HCT116 (cell line): ENCODE measurements at regions of chr1 and their contacts with region 1.

Region 1: GRCh38 chr1:114716304-114717170 is at the start of gene NRAS:
- DNase-seq: peak; percentile 79
- ATAC-seq: peak; percentile 95
- H3K4me3 ChIP-seq: peak within 1 kb of the TSS; percentile 89 to 99
- H3K27ac ChIP-seq: peak within 1 kb of the TSS; percentile 65
- H3K4me1 ChIP-seq: peaks cover 0 to 12% of the 10 kb centered on the region in 2 experiments; a peak in 2 of 4 replicates
- H3K27me3 ChIP-seq: no peaks in the 10 kb centered on the region
- CTCF ChIP-seq: no peak
- POLR2A ChIP-seq: no peak
- RAD21 ChIP-seq: no peak
- total RNA-seq, gene NRAS: 48.0 TPM

Region 2: GRCh38 chr1:114581335-114582287 is 134.9 kb before region 1 on chr1 and contains the start of gene BCAS2:
- CTCF ChIA-PET with region 1: no interaction called
- POLR2A ChIA-PET with region 1: no interaction called
- RAD21 ChIA-PET with region 1: no interaction called
- intact Hi-C with region 1: loop called (anchors 5 kb)
- DNase-seq: peak; percentile 98
- ATAC-seq: peak; percentile 97
- H3K4me3 ChIP-seq: peak within 1 kb of the TSS; percentile 78 to 87
- H3K27ac ChIP-seq: peak within 1 kb of the TSS; percentile 60
- H3K4me1 ChIP-seq: peaks cover 6 to 14% of the 10 kb centered on the region in 2 experiments; a peak in 3 of 4 replicates
- H3K27me3 ChIP-seq: no peaks in the 10 kb centered on the region
- CTCF ChIP-seq: no peak
- POLR2A ChIP-seq: peak; percentile 96
- RAD21 ChIP-seq: no peak
- total RNA-seq, gene BCAS2: 45.2 TPM